ENCODE measurements at regions of chr9 and their contacts with region 1.

Region 1: DNA sequence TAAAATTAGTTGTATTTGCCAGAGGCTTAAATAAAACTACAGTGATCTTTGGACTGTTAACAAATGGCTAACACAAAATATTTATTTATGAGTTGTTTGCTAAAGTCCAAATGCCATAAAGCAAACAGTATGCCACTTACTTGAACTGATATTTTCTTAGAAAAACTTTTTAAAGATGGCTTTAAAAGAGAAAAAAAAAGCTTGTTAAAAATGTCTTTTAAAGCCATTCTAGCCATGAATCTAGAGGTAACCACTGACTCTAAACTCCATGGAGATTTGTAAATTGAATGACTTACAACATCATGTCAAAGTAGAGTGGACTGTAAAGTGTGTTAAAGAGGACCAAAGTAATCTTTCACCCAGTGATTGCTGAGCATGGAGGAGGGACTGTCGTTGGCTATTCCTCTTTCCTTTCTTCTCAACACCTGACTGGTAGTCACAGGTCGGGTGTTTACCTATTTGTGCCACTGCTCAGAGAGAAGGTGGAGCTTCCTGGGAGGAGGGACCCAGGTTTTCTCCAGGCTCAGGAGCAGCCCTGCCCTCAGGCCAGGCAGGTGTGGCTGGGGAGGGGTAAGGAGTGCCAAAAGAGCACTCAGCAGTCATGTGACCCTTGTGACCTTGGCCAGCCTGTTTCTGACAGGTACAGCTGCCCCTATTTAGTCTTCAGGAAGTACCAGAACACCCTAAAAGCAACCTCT is 69.1 kb upstream of the TJP2 start:
- DNase-seq: peak; percentile 86
- ATAC-seq: peak; percentile 90
- H3K4me3 ChIP-seq: peak overlapping the region; percentile 33 to 69 (median 48)
- H3K27ac ChIP-seq: peak overlapping the region; percentile 100
- H3K4me1 ChIP-seq: peaks cover 63% of the 10 kb centered on the region
- H3K27me3 ChIP-seq: no peaks in the 10 kb centered on the region
- CTCF ChIP-seq: no peak
- EP300 ChIP-seq: peak in 1 of 2 experiments; percentile 78; a peak in 2 of 4 replicates
- POLR2A ChIP-seq: peak; percentile 52 to 67; a peak in 3 of 4 replicates
- RAD21 ChIP-seq: no peak

Region 2: DNA sequence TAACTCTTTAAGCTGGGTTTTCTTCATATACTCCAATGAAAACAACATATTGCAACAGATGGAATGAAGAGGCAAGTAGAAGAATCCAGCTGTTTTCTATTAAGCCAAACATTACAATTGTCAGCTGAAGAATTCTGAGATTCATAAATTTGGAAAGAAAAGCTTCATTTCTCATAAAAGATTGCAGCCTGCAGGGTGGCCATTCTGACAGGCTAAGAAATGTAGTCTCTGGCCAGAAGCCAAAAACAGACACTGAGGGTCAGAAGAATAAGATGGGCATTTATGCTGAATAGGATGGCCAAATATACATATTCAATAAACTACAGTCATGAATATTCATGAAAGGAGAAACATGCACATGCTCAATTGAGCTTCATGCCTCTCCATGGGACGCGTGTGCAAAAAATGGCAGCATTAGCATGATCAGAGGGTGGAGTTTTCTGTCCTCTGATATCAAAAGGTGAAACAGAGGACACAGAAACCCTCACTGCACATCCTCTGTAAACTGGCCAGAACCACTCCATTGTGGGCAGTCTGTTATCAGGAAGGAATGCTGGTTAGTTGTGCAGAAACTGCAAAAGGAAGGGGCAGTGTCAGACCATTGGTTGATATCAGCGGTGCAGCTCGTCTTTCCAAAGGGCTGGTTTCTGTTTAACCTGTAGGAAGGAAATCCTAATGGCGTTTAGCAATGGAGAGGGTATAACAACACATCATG is 19.3 kb before region 1 on chr9:
- CTCF ChIA-PET with region 1: no interaction called
- POLR2A ChIA-PET with region 1: interaction called, 10 read pairs
- in situ Hi-C with region 1: no loop called
- intact Hi-C with region 1: loop called (anchors 2 kb)
- DNase-seq: peak; percentile 53
- ATAC-seq: peak; percentile 81
- H3K4me3 ChIP-seq: peak overlapping the region in 2 of 3 experiments; percentile 26 to 38; a peak in 2 of 6 replicates
- H3K27ac ChIP-seq: peak overlapping the region; percentile 32
- H3K4me1 ChIP-seq: peaks cover 26% of the 10 kb centered on the region
- H3K27me3 ChIP-seq: no peaks in the 10 kb centered on the region
- CTCF ChIP-seq: no peak
- EP300 ChIP-seq: no peak
- POLR2A ChIP-seq: no peak
- RAD21 ChIP-seq: no peak

Region 3: GRCh38 chr9:69186841-69187611 is 82.0 kb after region 1 on chr9:
- CTCF ChIA-PET with region 1: interaction called, 3 read pairs
- POLR2A ChIA-PET with region 1: interaction called, 17 read pairs
- in situ Hi-C with region 1: no loop called
- intact Hi-C with region 1: no loop called
- DNase-seq: no peak
- ATAC-seq: no peak
- H3K4me3 ChIP-seq: no peak overlapping the region; a peak in 1 of 6 replicates
- H3K27ac ChIP-seq: peak overlapping the region; percentile 82
- H3K4me1 ChIP-seq: peaks cover 99% of the 10 kb centered on the region
- H3K27me3 ChIP-seq: no peaks in the 10 kb centered on the region
- CTCF ChIP-seq: no peak
- EP300 ChIP-seq: no peak
- POLR2A ChIP-seq: no peak
- RAD21 ChIP-seq: no peak